Astrocyte of the spinal cord (primary cell): ENCODE measurements at regions of chr5 and their contacts with region 1.

Region 1: GRCh38 chr5:57442080-57442839 is 40.4 kb downstream of the ACTBL2 start:
- DNase-seq: peak; percentile 97
- H3K4me3 ChIP-seq: no peak overlapping the region
- CTCF ChIP-seq: no peak

Region 2: GRCh38 chr5:57499262-57500050 is 57.2 kb after region 1 on chr5:
- in situ Hi-C with region 1: loop called (anchors 10 kb)
- DNase-seq: peak; percentile 72
- H3K4me3 ChIP-seq: no peak overlapping the region
- CTCF ChIP-seq: peak; percentile 74